AG04449 (cell line): ENCODE measurements at regions of chr3 and their contacts with region 1.

Region 1: DNA sequence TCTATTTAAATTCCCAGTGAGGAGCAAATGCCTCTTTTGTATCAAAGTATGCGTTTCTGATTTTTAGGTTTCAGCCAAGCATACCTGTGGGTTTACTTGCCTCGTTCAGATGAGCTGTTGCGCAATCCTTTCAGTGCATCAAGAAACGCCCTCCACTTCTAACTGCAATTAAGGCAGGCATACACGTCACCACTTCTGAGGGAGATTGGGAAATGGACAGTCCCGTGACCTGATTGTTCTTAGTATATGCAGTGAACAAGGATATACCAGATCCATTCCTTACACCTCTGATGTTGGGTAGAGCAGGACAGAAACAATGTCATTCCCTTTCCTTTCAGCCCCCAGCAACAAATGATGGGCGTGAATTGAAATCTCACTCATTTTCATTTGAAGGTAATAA is 219.0 kb downstream of the ITPR1 start:
- DNase-seq: no peak
- H3K4me3 ChIP-seq: no peak overlapping the region
- CTCF ChIP-seq: no peak

Region 2: DNA sequence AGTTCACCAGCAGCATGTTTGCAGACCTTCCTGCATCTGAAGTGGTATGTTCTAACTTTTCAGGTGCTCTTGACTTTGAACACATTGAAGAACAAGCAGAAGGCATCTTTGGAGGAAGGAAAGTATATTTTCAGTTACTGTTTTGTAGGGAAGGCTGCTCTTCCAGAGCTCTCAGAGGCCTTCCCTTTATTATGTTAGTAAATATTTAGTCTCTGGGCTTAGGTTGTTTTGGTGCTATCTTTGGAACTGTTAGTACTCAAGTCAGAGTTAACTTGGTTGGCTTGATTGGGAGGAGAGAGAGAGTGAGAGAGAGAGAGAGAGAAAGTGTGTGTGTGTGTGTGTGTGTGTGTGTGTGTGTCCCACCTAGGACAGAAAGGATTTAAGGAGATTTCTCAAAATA is 30.8 kb before region 1 on chr3:
- CTCF ChIA-PET with region 1: interaction called, 27 read pairs
- POLR2A ChIA-PET with region 1: no interaction called
- DNase-seq: no peak
- H3K4me3 ChIP-seq: no peak overlapping the region
- CTCF ChIP-seq: no peak

Region 3: GRCh38 chr3:4734454-4734853 is 22.3 kb after region 1 on chr3:
- CTCF ChIA-PET with region 1: interaction called, 14 read pairs
- POLR2A ChIA-PET with region 1: no interaction called
- DNase-seq: no peak
- H3K4me3 ChIP-seq: no peak overlapping the region
- CTCF ChIP-seq: no peak

Region 4: DNA sequence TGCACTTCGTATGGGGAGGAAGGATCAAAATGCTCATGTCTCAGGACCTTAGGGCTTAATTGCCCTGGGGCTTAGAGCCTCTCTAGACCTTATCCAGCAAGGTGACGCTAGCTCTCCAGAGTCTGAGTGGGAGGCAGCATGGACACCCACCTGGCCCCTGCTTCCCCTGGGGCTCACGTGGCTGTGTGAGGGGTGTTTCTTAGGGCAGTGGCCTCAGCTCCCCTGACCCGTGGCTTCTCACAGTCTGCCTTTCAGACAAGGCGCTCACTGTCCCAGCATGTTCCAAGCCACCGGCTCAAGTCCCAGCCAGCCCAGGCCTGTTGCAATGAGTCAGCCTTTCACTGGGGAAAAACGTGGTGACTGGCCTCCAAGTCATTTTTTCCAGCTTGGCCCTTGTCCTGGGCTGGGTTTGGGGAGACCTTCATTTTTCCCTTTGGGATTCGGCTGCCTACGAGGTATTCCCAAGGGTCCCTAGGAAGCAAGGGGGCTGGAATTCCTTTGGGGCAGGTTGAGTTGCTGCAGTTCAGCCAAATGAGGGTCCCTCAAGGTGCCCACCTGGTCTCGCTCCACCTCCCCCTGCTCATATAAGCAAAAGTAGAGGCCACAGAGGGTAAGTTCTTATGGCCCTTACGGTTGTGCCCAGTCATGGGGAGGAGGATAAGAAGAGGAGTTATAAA is 282.8 kb after region 1 on chr3:
- CTCF ChIA-PET with region 1: interaction called, 22 read pairs
- POLR2A ChIA-PET with region 1: no interaction called
- DNase-seq: no peak
- H3K4me3 ChIP-seq: no peak overlapping the region; the same call in 1 of the 2 replicates
- CTCF ChIP-seq: no peak

Region 5: DNA sequence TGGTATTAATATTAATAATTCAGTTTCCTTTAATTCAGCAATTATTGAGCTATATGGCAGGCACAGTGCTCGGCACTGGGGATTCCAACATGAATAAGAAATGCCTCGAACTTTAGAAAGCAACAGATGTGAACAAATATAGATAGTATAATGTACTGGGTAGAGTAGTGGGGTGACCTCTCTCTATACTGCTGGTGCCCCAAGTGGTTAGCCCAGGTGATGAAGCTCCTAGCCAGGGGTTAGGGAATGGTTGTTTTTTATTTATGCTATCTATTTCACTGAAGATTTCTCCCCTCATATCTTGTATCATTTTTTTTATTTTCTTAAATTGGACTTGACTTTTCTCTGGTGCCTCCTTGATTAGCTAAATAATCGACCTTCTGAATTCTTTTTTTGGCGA is 329.2 kb after region 1 on chr3:
- CTCF ChIA-PET with region 1: interaction called, 20 read pairs
- POLR2A ChIA-PET with region 1: interaction called, 3 read pairs
- DNase-seq: no peak
- H3K4me3 ChIP-seq: no peak overlapping the region
- CTCF ChIP-seq: no peak

Region 6: GRCh38 chr3:5122030-5122740 is 410.0 kb after region 1 on chr3 and contains the start of gene ARL8B:
- CTCF ChIA-PET with region 1: interaction called, 18 read pairs
- POLR2A ChIA-PET with region 1: no interaction called
- DNase-seq: no peak
- H3K4me3 ChIP-seq: peak within 1 kb of the TSS; percentile 93
- CTCF ChIP-seq: peak; percentile 96